Right cardiac atrium (tissue), 5 donors: ENCODE measurements at regions of chr12 and their contacts with region 1.

Region 1: GRCh38 chr12:69388371-69388770 is 28.8 kb downstream of the YEATS4 start:
- DNase-seq: no peak
- ATAC-seq: no peak
- H3K4me3 ChIP-seq: no peak overlapping the region
- H3K27ac ChIP-seq: no peak overlapping the region
- H3K4me1 ChIP-seq: no peaks in the 10 kb centered on the region
- H3K27me3 ChIP-seq: no peaks in the 10 kb centered on the region

Region 2: GRCh38 chr12:69553627-69554248 is 165.4 kb after region 1 on chr12:
- intact Hi-C with region 1: no loop called
- DNase-seq: no peak
- ATAC-seq: peak; percentile 35 to 59
- H3K4me3 ChIP-seq: no peak overlapping the region
- H3K27ac ChIP-seq: peak overlapping the region; percentile 26
- H3K4me1 ChIP-seq: peaks cover 5% of the 10 kb centered on the region
- H3K27me3 ChIP-seq: no peaks in the 10 kb centered on the region

Region 3: GRCh38 chr12:69639400-69640016 is 251.1 kb after region 1 on chr12:
- intact Hi-C with region 1: loop called in 1 of 4 experiments (anchors 10 kb)
- DNase-seq: peak; percentile 63 to 85 (median 85)
- ATAC-seq: peak; percentile 81 to 83
- H3K4me3 ChIP-seq: no peak overlapping the region
- H3K27ac ChIP-seq: no peak overlapping the region
- H3K4me1 ChIP-seq: no peaks in the 10 kb centered on the region
- H3K27me3 ChIP-seq: no peaks in the 10 kb centered on the region